ENCODE measurements at regions of chr1 and their contacts with region 1.

Region 1: DNA sequence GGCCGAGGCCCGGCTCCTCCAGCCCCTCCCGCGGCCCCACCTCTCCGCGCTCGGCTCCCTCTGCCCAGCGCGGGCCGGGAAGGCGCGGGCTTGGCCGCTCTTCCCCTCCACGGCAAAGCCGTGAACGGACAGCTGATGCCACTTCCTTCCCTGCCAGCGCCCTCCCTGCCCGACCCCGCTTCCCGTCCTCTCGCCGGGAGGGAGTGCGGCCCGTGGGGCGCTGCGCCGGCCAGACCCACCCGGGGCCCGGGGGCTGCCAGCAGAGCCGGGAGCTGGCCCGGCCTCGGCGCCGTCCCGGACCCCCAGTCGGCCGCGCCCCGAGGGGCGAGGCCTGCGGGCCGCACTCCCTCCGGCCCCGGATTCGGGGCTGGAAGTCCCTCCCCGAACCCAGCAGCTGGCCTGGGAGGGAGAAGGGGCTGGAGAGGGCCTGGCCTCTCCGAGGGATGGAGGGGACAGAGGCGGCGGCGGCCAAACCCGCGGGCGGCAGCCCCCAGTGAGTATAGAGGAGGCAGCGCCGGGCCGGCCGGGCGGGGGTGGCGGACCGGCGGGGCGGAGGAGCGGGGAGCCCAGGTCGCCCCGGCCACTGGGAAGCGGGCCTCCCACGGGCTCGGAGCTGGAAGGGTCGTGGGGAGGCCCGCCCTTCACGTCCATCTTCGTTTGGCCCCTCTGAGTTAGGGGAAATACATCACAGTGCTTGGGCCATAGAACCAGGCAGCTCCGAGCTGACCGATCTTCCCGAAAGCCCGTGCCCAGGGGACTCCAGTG is at the start of gene KIAA1614:
- DNase-seq: no peak
- ATAC-seq: peak; percentile 45
- H3K4me3 ChIP-seq: peak within 1 kb of the TSS; percentile 61
- H3K27ac ChIP-seq: no peak within 1 kb of the TSS
- H3K4me1 ChIP-seq: peaks cover 22% of the 10 kb centered on the region
- H3K27me3 ChIP-seq: peaks cover 0 to 3% of the 10 kb centered on the region in 2 experiments; a peak in 1 of 4 replicates
- CTCF ChIP-seq: no peak
- EP300 ChIP-seq: no peak
- POLR2A ChIP-seq: no peak
- RAD21 ChIP-seq: no peak
- polyA plus RNA-seq, gene KIAA1614: 0.03 TPM in 1 of 2 experiments, not detected in the other

Region 2: DNA sequence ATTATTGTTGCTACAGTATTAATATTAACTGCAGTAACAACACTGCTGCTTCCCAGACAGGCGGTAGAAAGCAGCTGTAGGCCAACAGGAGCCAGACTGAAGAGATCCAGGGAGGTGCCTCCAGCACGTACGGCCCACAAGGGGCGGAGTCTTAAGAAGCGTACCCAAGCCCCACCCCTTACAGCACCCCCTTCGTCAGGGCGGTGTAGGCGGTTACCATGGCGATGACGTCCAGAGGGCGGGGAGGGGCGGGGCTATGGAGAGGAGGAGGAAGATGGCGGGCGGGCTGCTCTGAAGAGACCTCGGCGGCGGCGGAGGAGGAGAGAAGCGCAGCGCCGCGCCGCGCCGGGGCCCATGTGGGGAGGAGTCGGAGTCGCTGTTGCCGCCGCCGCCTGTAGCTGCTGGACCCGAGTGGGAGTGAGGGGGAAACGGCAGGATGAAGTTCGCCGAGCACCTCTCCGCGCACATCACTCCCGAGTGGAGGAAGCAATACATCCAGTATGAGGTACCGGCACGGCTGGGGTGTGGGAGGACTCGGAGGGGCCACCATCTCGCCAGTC is 281.1 kb before region 1 on chr1 and contains the start of gene XPR1:
- CTCF ChIA-PET with region 1: no interaction called
- POLR2A ChIA-PET with region 1: interaction called, 3 read pairs
- RAD21 ChIA-PET with region 1: interaction called, 10 read pairs
- SMC1A ChIA-PET with region 1: interaction called, 4 read pairs
- in situ Hi-C with region 1: no loop called
- intact Hi-C with region 1: no loop called
- DNase-seq: peak; percentile 95
- ATAC-seq: peak; percentile 96
- H3K4me3 ChIP-seq: peak within 1 kb of the TSS; percentile 89
- H3K27ac ChIP-seq: peak within 1 kb of the TSS; percentile 56
- H3K4me1 ChIP-seq: peaks cover 8% of the 10 kb centered on the region
- H3K27me3 ChIP-seq: no peaks in the 10 kb centered on the region
- CTCF ChIP-seq: peak; percentile 9 to 16 (median 10); a peak in 1 of 6 replicates
- EP300 ChIP-seq: no peak
- POLR2A ChIP-seq: peak; percentile 88
- RAD21 ChIP-seq: peak; percentile 26; the same call in 1 of the 2 replicates
- polyA plus RNA-seq, gene XPR1: 1.1 to 1.5 TPM

Region 3: DNA sequence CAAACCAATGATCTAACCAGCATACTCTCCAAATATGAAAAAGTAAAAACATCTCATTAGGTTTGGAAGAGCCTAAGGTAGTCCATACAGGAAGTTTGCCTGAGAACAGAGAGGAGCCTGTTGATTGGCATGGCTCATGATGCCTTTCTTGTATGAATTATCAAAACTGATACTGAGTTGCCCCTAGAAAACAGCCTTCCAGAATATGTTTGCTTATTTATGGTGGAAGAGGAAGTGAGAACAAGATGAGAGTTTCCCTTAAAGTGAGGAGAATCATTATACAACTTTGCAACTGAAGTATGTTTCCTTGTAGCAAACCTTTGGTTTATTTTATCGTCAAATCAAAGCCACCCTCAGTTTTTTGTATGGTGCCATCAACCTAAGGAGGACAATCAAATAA is 24.1 kb before region 1 on chr1:
- CTCF ChIA-PET with region 1: interaction called, 344 read pairs
- POLR2A ChIA-PET with region 1: interaction called, 7 read pairs
- RAD21 ChIA-PET with region 1: interaction called, 215 read pairs
- SMC1A ChIA-PET with region 1: interaction called, 304 read pairs
- in situ Hi-C with region 1: no loop called
- intact Hi-C with region 1: no loop called
- DNase-seq: peak; percentile 50
- ATAC-seq: peak; percentile 96
- H3K4me3 ChIP-seq: no peak overlapping the region
- H3K27ac ChIP-seq: peak overlapping the region; percentile 10; the same call in 1 of the 2 replicates
- H3K4me1 ChIP-seq: peaks cover 8% of the 10 kb centered on the region
- H3K27me3 ChIP-seq: no peaks in the 10 kb centered on the region
- CTCF ChIP-seq: no peak
- EP300 ChIP-seq: peak in 1 of 2 experiments; percentile 62; a peak in 1 of 4 replicates
- POLR2A ChIP-seq: no peak
- RAD21 ChIP-seq: no peak

Region 4: DNA sequence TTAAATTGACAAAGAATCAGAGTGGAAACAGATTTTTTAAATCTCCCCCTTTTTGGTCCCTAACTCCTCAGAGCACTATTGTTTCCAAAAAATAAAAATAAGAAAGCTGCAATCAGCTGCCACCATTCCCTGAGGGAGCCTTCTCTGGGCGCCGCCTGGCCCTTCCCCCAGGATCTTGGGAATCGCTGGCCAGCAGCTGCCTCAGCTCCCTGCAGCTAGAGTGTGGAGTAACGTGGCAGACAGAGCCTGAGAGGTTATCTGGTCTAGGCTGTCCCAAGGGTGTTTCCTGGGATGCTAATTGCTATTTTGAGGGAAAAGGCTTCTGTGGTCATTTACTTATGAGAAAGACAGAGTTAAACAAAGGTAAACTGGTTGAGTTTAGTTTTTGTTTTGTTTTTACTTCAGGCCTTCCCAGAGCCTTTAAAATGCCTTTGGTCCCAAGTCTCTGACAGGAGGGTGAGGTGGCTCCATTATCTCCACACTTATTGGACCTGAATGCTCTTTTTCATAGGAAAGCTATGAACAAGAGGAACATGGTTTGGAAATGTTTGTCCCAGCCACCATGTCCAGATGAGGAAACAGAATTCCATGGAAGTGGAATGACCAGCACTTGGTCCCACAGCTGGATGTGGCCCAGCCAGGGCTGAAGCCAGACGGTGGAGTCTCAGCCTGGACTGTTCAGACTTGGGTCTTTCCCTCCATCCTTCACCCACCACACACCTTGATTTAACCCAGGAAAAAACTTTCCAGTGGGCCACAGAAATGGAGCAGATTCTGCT is 14.4 kb before region 1 on chr1:
- CTCF ChIA-PET with region 1: interaction called, 4 read pairs
- POLR2A ChIA-PET with region 1: interaction called, 3 read pairs
- RAD21 ChIA-PET with region 1: interaction called, 9 read pairs
- SMC1A ChIA-PET with region 1: interaction called, 22 read pairs
- in situ Hi-C with region 1: no loop called
- intact Hi-C with region 1: no loop called
- DNase-seq: no peak
- ATAC-seq: no peak
- H3K4me3 ChIP-seq: no peak overlapping the region
- H3K27ac ChIP-seq: no peak overlapping the region
- H3K4me1 ChIP-seq: no peaks in the 10 kb centered on the region
- H3K27me3 ChIP-seq: no peaks in the 10 kb centered on the region
- CTCF ChIP-seq: no peak
- EP300 ChIP-seq: no peak
- POLR2A ChIP-seq: no peak
- RAD21 ChIP-seq: no peak

Region 5: DNA sequence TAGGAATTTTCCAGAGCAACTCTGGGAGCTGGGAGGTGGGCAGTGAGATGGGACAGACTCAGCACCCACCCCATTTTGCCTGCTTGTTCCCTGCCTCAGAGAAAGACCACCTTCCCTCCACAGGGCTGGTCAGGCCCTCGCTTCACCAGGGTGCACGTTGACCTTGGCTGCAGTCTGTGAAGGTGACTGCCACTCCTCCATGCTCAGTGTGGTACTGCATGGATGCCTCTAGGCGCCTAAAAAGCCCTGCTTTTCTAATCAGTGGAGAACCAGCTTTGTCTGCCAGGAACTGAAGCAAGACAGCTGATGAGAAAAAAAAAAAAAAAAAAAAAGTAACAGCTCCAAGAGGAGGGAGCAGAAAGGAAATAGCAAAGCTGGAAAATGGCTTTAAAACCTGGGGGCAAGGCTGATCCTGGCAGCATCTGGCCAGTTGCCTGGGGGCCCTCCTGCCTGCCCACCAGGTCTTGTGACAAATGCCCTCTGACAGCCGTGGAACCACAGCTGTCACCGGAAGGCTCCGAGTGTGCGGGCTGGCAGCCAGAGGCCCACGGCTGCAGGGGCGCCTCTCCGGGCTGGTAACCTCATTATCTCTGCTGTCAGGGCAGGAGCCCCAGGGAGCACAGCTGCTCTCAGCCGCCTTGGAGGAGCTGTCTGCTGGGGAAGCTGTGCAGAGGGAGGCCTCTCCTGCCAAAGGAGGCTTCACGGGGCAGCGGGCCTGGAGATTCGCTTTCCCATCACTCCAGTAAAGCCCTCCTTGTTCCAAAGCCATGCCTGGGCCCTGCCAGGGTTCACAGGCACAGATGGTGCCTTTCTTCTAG is 13.4 kb after region 1 on chr1:
- CTCF ChIA-PET with region 1: interaction called, 14 read pairs
- POLR2A ChIA-PET with region 1: interaction called, 4 read pairs
- RAD21 ChIA-PET with region 1: interaction called, 18 read pairs
- SMC1A ChIA-PET with region 1: interaction called, 4 read pairs
- in situ Hi-C with region 1: no loop called
- intact Hi-C with region 1: no loop called
- DNase-seq: no peak
- ATAC-seq: peak; percentile 32
- H3K4me3 ChIP-seq: no peak overlapping the region
- H3K27ac ChIP-seq: no peak overlapping the region
- H3K4me1 ChIP-seq: peaks cover 5% of the 10 kb centered on the region; the same call in 1 of the 2 replicates
- H3K27me3 ChIP-seq: peaks cover 0 to 3% of the 10 kb centered on the region in 2 experiments; a peak in 1 of 4 replicates
- CTCF ChIP-seq: no peak
- EP300 ChIP-seq: no peak
- POLR2A ChIP-seq: no peak
- RAD21 ChIP-seq: no peak

Region 6: DNA sequence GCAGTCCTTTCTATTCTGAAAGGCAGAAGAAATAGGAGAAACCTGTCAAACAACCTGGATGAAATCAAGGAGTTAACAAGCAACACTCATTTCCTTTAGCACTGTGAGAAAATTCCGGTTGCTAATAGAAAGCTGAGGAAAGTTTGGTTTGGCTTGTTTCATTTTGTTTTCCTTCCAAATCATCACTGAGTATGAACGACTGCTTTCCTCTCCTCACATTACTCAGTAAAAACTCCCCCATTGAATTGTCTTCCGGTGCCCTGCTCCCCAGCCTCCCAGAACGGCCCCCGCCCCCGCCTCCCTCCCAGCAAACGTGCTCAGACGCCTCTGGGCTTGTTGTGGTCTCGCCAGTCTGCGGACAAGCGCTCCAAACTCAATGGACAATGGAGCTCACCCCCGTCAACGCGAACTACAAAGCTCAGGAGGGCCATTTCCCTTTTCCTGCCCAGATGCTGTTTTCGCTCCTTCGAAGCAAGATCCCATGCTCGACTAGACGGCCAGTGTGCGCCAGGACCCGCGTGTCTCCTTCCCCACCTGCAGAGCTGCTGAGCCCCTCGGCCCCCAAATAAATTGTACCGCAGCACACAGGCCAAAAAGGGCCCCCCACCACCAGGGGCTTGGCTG is 108.9 kb after region 1 on chr1:
- CTCF ChIA-PET with region 1: no interaction called
- POLR2A ChIA-PET with region 1: interaction called, 4 read pairs
- RAD21 ChIA-PET with region 1: interaction called, 18 read pairs
- SMC1A ChIA-PET with region 1: interaction called, 9 read pairs
- in situ Hi-C with region 1: no loop called
- intact Hi-C with region 1: no loop called
- DNase-seq: no peak
- ATAC-seq: peak; percentile 76
- H3K4me3 ChIP-seq: peak overlapping the region; percentile 90
- H3K27ac ChIP-seq: peak overlapping the region; percentile 89
- H3K4me1 ChIP-seq: peaks cover 12% of the 10 kb centered on the region
- H3K27me3 ChIP-seq: no peaks in the 10 kb centered on the region
- CTCF ChIP-seq: no peak
- EP300 ChIP-seq: no peak
- POLR2A ChIP-seq: no peak
- RAD21 ChIP-seq: no peak

Measured in GM12878 (cell line).